Right ventricle myocardium inferior (tissue), 1 donor: ENCODE measurements at regions of chr10 and their contacts with region 1.

Region 1: DNA sequence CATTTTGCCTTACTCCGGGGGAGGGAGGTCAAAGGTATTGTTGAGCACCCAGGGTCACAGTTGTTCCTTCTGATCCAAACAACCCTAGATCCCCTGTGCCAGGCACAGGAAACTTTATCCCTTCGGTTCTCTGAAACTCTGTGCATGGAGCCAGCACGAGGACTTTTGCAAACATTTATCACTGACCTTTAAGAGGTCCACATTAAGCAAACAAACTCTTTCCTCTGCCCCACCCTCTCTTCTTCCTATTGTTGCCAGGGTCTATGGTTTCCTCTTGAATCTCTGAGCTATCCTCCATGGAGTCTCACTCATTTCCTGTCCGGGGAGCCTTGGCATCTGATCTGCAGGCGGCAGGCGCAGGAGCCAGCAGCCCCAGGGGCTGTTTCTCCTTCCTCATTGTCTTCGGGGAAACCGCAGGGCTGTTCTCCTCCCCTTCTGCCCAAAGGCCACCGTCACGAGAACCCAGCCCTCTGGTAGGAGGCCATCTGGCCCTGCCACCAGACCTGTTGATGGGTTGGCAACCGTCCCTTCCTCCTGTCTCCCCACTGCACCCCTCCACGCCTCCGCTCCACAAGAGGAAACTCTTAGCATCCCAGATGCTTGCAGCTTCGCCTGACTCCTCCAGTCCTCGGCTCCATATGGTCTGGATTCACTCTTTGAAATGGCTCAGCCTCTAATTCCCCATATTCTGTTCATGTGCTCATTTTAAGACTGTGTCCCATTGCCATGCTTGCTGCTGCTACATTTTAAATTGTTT is 327.3 kb upstream of the NRP1 start:
- DNase-seq: peak; percentile 84
- ATAC-seq: peak; percentile 78

Region 2: DNA sequence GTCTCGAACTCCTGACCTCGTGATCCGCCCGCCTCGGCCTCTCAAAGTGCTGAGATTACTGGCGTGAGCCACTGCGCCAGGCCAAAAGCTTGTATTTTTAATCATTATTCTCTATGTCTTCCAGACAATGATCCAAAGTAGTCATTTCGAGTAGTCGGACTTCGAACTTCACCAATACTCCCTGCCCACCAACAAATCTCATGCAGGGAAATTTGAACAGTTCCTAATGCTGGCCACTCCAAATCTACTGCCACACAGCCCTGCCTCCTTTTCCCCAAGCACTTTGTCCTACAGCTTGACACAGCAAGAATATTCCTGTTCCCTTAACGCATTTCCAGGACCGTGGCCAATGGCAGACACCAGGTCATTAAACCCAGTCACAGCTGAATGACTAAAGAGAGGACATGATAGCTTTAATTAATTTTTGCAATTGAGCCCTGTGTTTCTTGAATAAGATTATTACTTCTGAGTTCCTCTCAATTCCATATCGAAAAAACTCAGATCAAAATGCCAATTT is 184.9 kb before region 1 on chr10:
- intact Hi-C with region 1: loop called (anchors 10 kb)
- DNase-seq: no peak
- ATAC-seq: peak; percentile 60

Region 3: GRCh38 chr10:33772370-33773252 is 110.9 kb after region 1 on chr10:
- intact Hi-C with region 1: loop called (anchors 10 kb)
- DNase-seq: no peak
- ATAC-seq: no peak